ENCODE measurements at regions of chr14 and their contacts with region 1.

Region 1: GRCh38 chr14:50954811-50955372 is 10.6 kb upstream of the PYGL start:
- DNase-seq: no peak
- H3K4me3 ChIP-seq: no peak overlapping the region
- CTCF ChIP-seq: peak; percentile 61

Region 2: DNA sequence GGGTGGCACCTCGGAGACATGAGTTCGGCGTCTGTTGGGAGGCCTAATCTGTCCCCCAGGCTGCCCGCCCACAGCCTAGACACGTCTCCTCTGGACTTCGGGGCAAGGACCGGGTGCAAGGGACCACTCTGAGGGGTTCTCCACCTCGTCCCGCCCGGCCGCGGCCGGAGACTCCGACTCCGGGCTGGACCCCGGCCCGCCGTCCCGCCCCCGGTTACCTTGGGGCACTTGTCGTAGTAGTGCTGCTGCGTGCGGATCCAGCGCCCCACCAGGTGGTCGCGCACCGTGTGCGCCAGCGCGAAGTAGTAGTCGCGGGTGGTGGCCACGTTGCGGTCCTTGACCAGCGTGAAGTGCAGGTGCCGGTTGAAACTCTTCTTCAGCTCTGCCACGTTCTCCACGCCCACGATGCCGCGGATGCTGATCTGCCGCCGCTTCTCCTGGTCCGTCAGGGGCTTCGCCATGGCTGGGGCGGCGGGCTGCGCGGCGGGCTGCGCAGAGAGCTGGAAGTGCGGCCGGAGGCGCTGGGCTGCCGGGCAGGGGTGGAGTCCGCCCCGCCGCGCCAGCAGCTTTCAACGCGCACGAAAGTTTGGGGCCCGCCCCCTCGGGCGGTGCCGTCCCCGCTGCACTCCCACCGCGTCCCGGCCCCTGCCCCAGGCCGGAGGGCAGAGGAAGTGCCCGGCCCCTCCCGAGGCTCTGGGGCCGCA is 10.8 kb before region 1 on chr14 and contains the start of gene PYGL:
- CTCF ChIA-PET with region 1: interaction called, 16 read pairs
- POLR2A ChIA-PET with region 1: interaction called, 8 read pairs
- DNase-seq: no peak
- H3K4me3 ChIP-seq: peak within 1 kb of the TSS; percentile 83
- CTCF ChIP-seq: no peak

Region 3: GRCh38 chr14:51219473-51220448 is 264.9 kb after region 1 on chr14:
- CTCF ChIA-PET with region 1: interaction called, 33 read pairs
- POLR2A ChIA-PET with region 1: no interaction called
- DNase-seq: no peak
- H3K4me3 ChIP-seq: no peak overlapping the region
- CTCF ChIP-seq: peak; percentile 31

Measured in AG04449 (cell line).